Mammary epithelial cell (primary cell): ENCODE measurements at regions of chr1 and their contacts with region 1.

Region 1: GRCh38 chr1:100127226-100127625 is 5.5 kb downstream of the SASS6 start:
- DNase-seq: no peak
- H3K4me3 ChIP-seq: no peak overlapping the region
- H3K27ac ChIP-seq: no peak overlapping the region
- H3K4me1 ChIP-seq: peaks cover 6% of the 10 kb centered on the region
- H3K27me3 ChIP-seq: no peaks in the 10 kb centered on the region
- CTCF ChIP-seq: no peak

Region 2: GRCh38 chr1:100188617-100189016 is 61.4 kb after region 1 on chr1:
- CTCF ChIA-PET with region 1: no interaction called
- dilution Hi-C with region 1: loop called (anchors 5 kb)
- in situ Hi-C with region 1: no loop called
- intact Hi-C with region 1: no loop called
- DNase-seq: peak; percentile 6
- H3K4me3 ChIP-seq: no peak overlapping the region
- H3K27ac ChIP-seq: no peak overlapping the region
- H3K4me1 ChIP-seq: no peaks in the 10 kb centered on the region
- H3K27me3 ChIP-seq: no peaks in the 10 kb centered on the region
- CTCF ChIP-seq: no peak